Activated T-helper 1 cell treated with anti-CD3 and anti-CD28 coated beads, Interleukin-12 subunit alpha, Interleukin-12 subunit beta, Interleukin-2, Interleukin-4 antibody, amounts not matched to agents 30 ng/mL and 10 ng/mL and 1 ng/mL, durations not matched to agents 14 hours and 24 hours and 36 hours (primary cell): ENCODE measurements at regions of chr12 and their contacts with region 1.

Region 1: GRCh38 chr12:112108201-112109079 is at the start of gene NAA25:
- DNase-seq: peak; percentile 84
- H3K4me3 Mint-ChIP-seq: peak within 1 kb of the TSS; percentile 99
- H3K27ac Mint-ChIP-seq: peak within 1 kb of the TSS; percentile 98
- H3K4me1 Mint-ChIP-seq: peaks cover 42% of the 10 kb centered on the region
- H3K27me3 Mint-ChIP-seq: no peaks in the 10 kb centered on the region
- total RNA-seq, gene NAA25: 52.2 and 58.1 TPM in 2 replicates

Region 2: GRCh38 chr12:111841750-111842555 is 266.5 kb before region 1 on chr12 and contains the start of gene MAPKAPK5:
- intact Hi-C with region 1: loop called (anchors 1 kb)
- DNase-seq: peak; percentile 95
- H3K4me3 Mint-ChIP-seq: peak within 1 kb of the TSS; percentile 98
- H3K27ac Mint-ChIP-seq: peak within 1 kb of the TSS; percentile 99
- H3K4me1 Mint-ChIP-seq: peaks cover 49% of the 10 kb centered on the region
- H3K27me3 Mint-ChIP-seq: no peaks in the 10 kb centered on the region
- total RNA-seq, gene MAPKAPK5: 82.1 and 86.5 TPM in 2 replicates

Region 3: GRCh38 chr12:112087055-112087850 is 21.2 kb before region 1 on chr12:
- intact Hi-C with region 1: loop called (anchors 1 kb)
- DNase-seq: no peak
- H3K4me3 Mint-ChIP-seq: no peak overlapping the region
- H3K27ac Mint-ChIP-seq: peak overlapping the region; percentile 24
- H3K4me1 Mint-ChIP-seq: peaks cover 32% of the 10 kb centered on the region
- H3K27me3 Mint-ChIP-seq: no peaks in the 10 kb centered on the region

Region 4: GRCh38 chr12:112096667-112097066 is 11.8 kb before region 1 on chr12:
- intact Hi-C with region 1: loop called (anchors 1 kb)
- DNase-seq: no peak
- H3K4me3 Mint-ChIP-seq: peak overlapping the region; percentile 38
- H3K27ac Mint-ChIP-seq: peak overlapping the region; percentile 76
- H3K4me1 Mint-ChIP-seq: peaks cover 26% of the 10 kb centered on the region
- H3K27me3 Mint-ChIP-seq: no peaks in the 10 kb centered on the region

Region 5: DNA sequence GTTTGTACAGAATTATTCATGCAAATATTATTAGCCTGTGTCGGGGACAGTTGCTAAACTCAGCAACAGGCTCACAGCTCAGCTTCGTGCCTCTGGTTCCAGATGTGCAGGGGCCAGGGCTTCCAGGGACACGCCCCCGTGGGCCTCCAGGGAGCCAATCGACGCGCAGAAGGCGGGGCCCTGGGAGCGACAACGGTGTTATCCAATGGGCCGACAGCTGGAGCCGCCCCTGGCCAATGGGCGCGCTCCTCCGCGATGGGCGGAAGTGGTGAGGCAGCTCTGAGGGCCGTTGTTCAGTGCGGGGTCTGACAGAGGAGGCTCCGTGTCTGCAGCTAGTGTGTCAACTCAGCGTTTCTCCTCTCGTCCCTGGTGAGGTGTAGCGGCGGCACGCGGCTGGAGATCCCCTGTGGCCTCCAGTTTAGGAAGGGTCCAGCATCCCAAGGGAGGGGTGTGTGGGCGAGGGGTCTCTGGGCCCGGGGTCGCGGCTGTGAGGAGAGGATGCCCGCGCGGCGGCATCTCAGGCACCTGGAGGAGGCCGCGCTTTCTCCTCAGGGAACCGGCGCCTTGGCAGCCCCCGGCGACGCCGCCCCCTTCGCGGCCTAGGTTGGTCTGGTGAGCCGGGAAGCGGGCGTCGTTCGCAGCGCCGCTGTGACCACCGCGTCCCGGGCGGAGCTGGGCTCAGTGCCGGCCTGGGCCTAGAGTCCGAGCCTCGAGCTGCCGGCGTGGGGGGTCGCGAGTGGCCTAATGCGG is 17.0 kb after region 1 on chr12 and contains the start of gene TRAFD1:
- intact Hi-C with region 1: loop called (anchors 1 kb)
- DNase-seq: peak; percentile 98
- H3K4me3 Mint-ChIP-seq: peak within 1 kb of the TSS; percentile 82
- H3K27ac Mint-ChIP-seq: peak within 1 kb of the TSS; percentile 84
- H3K4me1 Mint-ChIP-seq: peaks cover 41% of the 10 kb centered on the region
- H3K27me3 Mint-ChIP-seq: peaks cover 10% of the 10 kb centered on the region
- total RNA-seq, gene TRAFD1: 46.5 and 46.7 TPM in 2 replicates

Region 6: DNA sequence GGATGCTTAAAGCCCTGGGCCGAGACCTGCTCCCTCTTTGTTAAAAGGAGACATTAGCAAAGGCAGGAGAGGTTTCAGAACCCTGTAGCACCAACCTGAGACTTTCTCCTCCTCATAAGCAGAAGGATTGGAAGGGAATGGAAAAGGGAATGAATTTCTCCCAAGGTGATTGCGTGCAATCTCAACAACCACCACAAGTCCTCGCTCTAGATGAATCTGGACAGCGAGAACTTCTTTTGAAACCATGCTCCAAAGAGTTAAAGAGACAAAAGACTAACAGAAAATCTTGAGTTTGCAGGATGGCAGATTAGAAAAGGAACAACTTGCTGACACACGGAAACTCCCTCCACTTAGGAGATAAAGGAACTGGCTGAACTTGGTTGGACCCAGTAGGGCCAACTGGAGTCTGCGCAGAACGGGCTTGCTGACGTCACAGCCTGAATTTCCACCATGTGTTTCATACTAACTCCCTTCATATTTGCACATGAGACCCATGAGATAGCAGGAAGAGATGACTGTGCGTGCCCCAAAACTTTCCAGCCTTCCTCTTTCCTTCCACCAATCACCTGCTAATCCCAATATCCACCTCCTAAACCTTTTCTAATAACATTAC is 447.3 kb after region 1 on chr12:
- intact Hi-C with region 1: no loop called
- DNase-seq: no peak
- H3K4me3 Mint-ChIP-seq: no peak overlapping the region
- H3K27ac Mint-ChIP-seq: no peak overlapping the region
- H3K4me1 Mint-ChIP-seq: no peaks in the 10 kb centered on the region
- H3K27me3 Mint-ChIP-seq: peaks cover 12% of the 10 kb centered on the region